ENCODE measurements at regions of chr5 and their contacts with region 1.

Region 1: DNA sequence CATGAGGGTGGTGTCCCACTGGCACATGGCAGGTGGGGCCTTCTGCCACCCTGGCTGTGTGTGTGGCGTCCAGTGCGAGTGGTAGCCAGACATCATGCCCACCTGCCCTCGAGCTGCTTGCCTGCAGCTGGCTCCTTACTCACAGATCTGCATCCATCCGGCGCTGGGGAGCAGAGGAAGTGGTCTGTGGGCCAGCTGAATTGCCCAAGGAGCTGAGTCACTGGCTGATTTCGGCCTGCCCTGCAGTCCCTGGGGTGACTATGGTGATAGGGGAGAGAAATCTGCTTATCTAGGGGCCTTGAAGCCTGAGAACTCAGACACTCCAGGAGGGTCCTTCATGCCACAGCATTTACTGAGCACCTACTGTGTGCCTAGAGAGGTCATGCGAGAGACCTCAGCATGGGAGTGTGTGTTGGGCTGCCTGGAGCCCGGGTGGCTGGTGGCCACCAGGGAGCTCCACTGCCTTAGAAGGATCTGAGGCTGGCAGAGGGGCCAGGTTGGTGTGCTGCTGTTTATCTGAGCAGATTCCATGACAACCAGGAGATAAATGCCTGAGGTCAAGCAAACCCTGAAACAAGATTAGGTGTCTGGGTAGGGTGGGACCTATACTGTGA is 57.1 kb downstream of the SLC22A5 start:
- DNase-seq: peak; percentile 64
- ATAC-seq: peak; percentile 41
- H3K4me3 ChIP-seq: peak overlapping the region in 2 of 5 experiments; percentile 8 to 56
- H3K4me3 Mint-ChIP-seq: peak overlapping the region; percentile 80
- H3K27ac ChIP-seq: peak overlapping the region; percentile 90 to 94
- H3K27ac Mint-ChIP-seq: peak overlapping the region; percentile 93
- H3K4me1 ChIP-seq: peaks cover 99 to 100% of the 10 kb centered on the region in 2 donors
- H3K4me1 Mint-ChIP-seq: peaks cover 97% of the 10 kb centered on the region
- H3K27me3 ChIP-seq: no peaks in the 10 kb centered on the region
- H3K27me3 Mint-ChIP-seq: no peaks in the 10 kb centered on the region
- CTCF ChIP-seq: no peak

Region 2: DNA sequence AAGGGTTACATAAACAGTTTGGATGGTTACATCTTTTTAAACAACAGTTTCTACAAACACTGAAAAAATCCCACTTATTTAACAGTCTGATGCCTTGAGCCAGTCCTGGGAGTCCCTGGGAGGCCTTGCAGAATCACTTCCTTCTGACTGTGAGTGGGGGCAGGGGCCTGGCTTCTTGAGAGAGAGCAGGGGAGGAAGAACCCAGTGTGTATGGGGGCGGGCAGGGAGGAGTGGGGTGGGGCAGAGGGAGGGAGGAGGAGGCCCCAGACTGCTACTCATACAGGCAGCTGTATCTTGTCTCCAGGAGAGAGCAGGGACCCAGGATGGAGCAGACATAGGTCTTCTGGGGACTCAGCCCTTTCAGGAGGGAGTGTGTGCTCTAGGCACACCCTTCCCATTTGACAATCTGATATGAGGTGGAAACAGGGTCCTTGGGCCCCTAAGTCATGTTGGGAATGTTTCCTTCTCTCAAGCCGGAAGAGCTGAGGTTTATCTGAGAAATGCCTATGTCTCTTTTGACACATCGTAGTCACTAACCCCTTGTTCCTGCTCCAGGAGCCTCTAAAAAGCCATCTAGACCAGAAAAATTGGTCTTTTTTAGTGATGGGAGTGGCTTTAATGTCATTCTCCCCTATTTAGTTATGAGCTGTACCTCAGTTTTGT is 11.1 kb after region 1 on chr5:
- CTCF ChIA-PET with region 1: interaction called, 43 read pairs
- POLR2A ChIA-PET with region 1: interaction called, 7 read pairs
- intact Hi-C with region 1: loop called (anchors 1 kb)
- DNase-seq: peak; percentile 75
- ATAC-seq: peak; percentile 97
- H3K4me3 ChIP-seq: no peak overlapping the region
- H3K4me3 Mint-ChIP-seq: peak overlapping the region; percentile 55
- H3K27ac ChIP-seq: peak overlapping the region; percentile 42 to 65
- H3K27ac Mint-ChIP-seq: peak overlapping the region; percentile 83
- H3K4me1 ChIP-seq: peaks cover 22 to 44% of the 10 kb centered on the region in 2 donors
- H3K4me1 Mint-ChIP-seq: peaks cover 64% of the 10 kb centered on the region
- H3K27me3 ChIP-seq: no peaks in the 10 kb centered on the region
- H3K27me3 Mint-ChIP-seq: no peaks in the 10 kb centered on the region
- CTCF ChIP-seq: no peak

Region 3: GRCh38 chr5:132466433-132467286 is 40.0 kb after region 1 on chr5:
- CTCF ChIA-PET with region 1: interaction called, 31 read pairs
- POLR2A ChIA-PET with region 1: interaction called, 35 read pairs
- intact Hi-C with region 1: no loop called
- DNase-seq: peak; percentile 72
- ATAC-seq: peak; percentile 61
- H3K4me3 ChIP-seq: peak overlapping the region; percentile 10 to 53 (median 35)
- H3K4me3 Mint-ChIP-seq: peak overlapping the region; percentile 62
- H3K27ac ChIP-seq: peak overlapping the region; percentile 70 to 72
- H3K27ac Mint-ChIP-seq: peak overlapping the region; percentile 77
- H3K4me1 ChIP-seq: peaks cover 71 to 83% of the 10 kb centered on the region in 2 donors
- H3K4me1 Mint-ChIP-seq: peaks cover 85% of the 10 kb centered on the region
- H3K27me3 ChIP-seq: no peaks in the 10 kb centered on the region
- H3K27me3 Mint-ChIP-seq: no peaks in the 10 kb centered on the region
- CTCF ChIP-seq: no peak

Region 4: DNA sequence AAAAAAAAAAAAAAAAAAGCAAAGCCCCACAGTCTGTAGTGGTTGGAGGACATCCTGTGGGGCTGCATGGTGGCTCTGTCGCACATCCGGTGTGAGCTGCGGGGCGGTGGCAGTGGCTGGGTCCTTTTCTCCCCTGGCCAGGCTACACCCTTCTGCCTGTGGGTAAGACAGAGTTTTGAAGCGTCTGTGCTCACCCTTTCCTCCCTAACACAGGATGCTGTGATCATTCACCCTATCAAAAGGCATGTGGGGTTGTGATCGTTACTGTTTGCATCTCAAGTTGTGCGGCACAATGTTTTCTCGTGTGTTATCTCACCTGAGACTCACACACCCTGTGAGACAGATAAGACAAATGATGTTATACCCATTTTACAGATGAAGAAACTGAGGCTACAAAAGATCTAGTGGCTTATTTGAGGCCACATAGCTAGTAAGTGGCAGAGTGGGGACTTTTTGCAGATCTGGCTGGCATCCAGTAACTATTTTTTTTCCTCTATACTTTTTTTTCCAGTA is 46.4 kb after region 1 on chr5:
- CTCF ChIA-PET with region 1: interaction called, 48 read pairs
- POLR2A ChIA-PET with region 1: interaction called, 26 read pairs
- intact Hi-C with region 1: loop called (anchors 1 kb)
- DNase-seq: peak; percentile 88
- ATAC-seq: peak; percentile 86
- H3K4me3 ChIP-seq: no peak overlapping the region
- H3K4me3 Mint-ChIP-seq: peak overlapping the region; percentile 83
- H3K27ac ChIP-seq: peak overlapping the region; percentile 81 to 93
- H3K27ac Mint-ChIP-seq: peak overlapping the region; percentile 99
- H3K4me1 ChIP-seq: peaks cover 46 to 75% of the 10 kb centered on the region in 2 donors
- H3K4me1 Mint-ChIP-seq: peaks cover 78% of the 10 kb centered on the region
- H3K27me3 ChIP-seq: no peaks in the 10 kb centered on the region
- H3K27me3 Mint-ChIP-seq: no peaks in the 10 kb centered on the region
- CTCF ChIP-seq: no peak

Region 5: GRCh38 chr5:132490486-132491367 is 64.1 kb after region 1 on chr5 and contains the start of gene IRF1:
- CTCF ChIA-PET with region 1: interaction called, 121 read pairs
- POLR2A ChIA-PET with region 1: interaction called, 48 read pairs
- intact Hi-C with region 1: loop called (anchors 1 kb)
- DNase-seq: peak; percentile 98
- ATAC-seq: peak; percentile 70
- H3K4me3 ChIP-seq: peak within 1 kb of the TSS; percentile 81 to 99 (median 89)
- H3K4me3 Mint-ChIP-seq: peak within 1 kb of the TSS; percentile 96
- H3K27ac ChIP-seq: peak within 1 kb of the TSS; percentile 99
- H3K27ac Mint-ChIP-seq: peak within 1 kb of the TSS; percentile 96
- H3K4me1 ChIP-seq: peaks cover 74 to 81% of the 10 kb centered on the region in 2 donors
- H3K4me1 Mint-ChIP-seq: peaks cover 76% of the 10 kb centered on the region
- H3K27me3 ChIP-seq: no peaks in the 10 kb centered on the region
- H3K27me3 Mint-ChIP-seq: no peaks in the 10 kb centered on the region
- CTCF ChIP-seq: no peak
- total RNA-seq, gene IRF1: 304 and 306 TPM in 2 replicates

Region 6: GRCh38 chr5:132495667-132496190 is 69.1 kb after region 1 on chr5:
- CTCF ChIA-PET with region 1: interaction called, 121 read pairs
- POLR2A ChIA-PET with region 1: interaction called, 48 read pairs
- intact Hi-C with region 1: loop called (anchors 1 kb)
- DNase-seq: peak; percentile 91
- ATAC-seq: peak; percentile 58
- H3K4me3 ChIP-seq: peak overlapping the region; percentile 42 to 91 (median 84)
- H3K4me3 Mint-ChIP-seq: peak overlapping the region; percentile 97
- H3K27ac ChIP-seq: peak overlapping the region; percentile 85 to 95
- H3K27ac Mint-ChIP-seq: peak overlapping the region; percentile 97
- H3K4me1 ChIP-seq: peaks cover 48 to 59% of the 10 kb centered on the region in 2 donors
- H3K4me1 Mint-ChIP-seq: peaks cover 68% of the 10 kb centered on the region
- H3K27me3 ChIP-seq: no peaks in the 10 kb centered on the region
- H3K27me3 Mint-ChIP-seq: no peaks in the 10 kb centered on the region
- CTCF ChIP-seq: no peak

Region 7: GRCh38 chr5:132788508-132788907 is 361.9 kb after region 1 on chr5:
- CTCF ChIA-PET with region 1: no interaction called
- POLR2A ChIA-PET with region 1: interaction called, 10 read pairs
- intact Hi-C with region 1: no loop called
- DNase-seq: no peak
- ATAC-seq: no peak
- H3K4me3 ChIP-seq: no peak overlapping the region
- H3K4me3 Mint-ChIP-seq: no peak overlapping the region
- H3K27ac ChIP-seq: no peak overlapping the region
- H3K27ac Mint-ChIP-seq: no peak overlapping the region
- H3K4me1 ChIP-seq: no peaks in the 10 kb centered on the region
- H3K4me1 Mint-ChIP-seq: no peaks in the 10 kb centered on the region
- H3K27me3 ChIP-seq: peaks cover 0 to 19% (median 5%) of the 10 kb centered on the region in 4 experiments
- H3K27me3 Mint-ChIP-seq: peaks cover 33% of the 10 kb centered on the region
- CTCF ChIP-seq: no peak

Measured in B cell (primary cell).